ENCODE measurements at regions of chrX and their contacts with region 1.

Region 1: GRCh38 chrX:71400710-71401109 is 34.6 kb downstream of the TAF1 start:
- DNase-seq: no peak
- ATAC-seq: no peak
- H3K4me3 ChIP-seq: no peak overlapping the region
- H3K27ac ChIP-seq: no peak overlapping the region
- H3K4me1 ChIP-seq: no peaks in the 10 kb centered on the region
- H3K27me3 ChIP-seq: peaks cover 0 to 6% (median 2%) of the 10 kb centered on the region in 4 donors
- CTCF ChIP-seq: no peak

Region 2: DNA sequence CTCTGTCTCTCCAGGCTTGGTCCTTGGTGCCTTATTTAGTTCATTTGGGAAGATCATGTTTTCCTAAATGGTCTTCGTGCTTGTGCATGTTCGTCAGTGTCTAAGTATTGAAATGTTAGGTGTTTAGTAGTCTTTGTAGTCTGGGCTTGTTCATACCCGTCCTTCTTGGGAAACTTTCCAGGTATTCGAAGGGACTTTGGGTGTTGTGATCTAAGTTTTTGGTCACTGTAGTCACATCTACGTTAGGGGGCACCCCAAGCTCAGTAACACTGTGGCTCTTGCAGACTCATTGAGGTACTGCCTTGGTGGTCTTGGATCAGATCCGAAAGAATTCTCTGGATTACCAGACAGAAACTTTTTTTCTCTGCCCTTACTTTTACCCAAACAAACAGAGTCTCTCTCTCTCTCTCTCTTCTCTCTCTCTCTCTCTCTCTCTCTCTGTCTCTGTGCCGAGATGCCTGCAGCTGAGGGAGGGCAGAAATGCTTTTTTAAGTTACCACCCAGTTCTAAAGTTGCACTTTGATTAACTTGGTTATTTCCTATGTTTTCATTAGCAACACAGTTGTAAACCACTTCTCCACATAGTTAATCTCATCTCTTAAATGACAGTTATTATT is 402.2 kb before region 1 on chrX:
- intact Hi-C with region 1: no loop called
- DNase-seq: no peak
- ATAC-seq: no peak
- H3K4me3 ChIP-seq: no peak overlapping the region
- H3K27ac ChIP-seq: no peak overlapping the region
- H3K4me1 ChIP-seq: no peaks in the 10 kb centered on the region
- H3K27me3 ChIP-seq: peaks cover 0 to 6% (median 2%) of the 10 kb centered on the region in 4 donors
- CTCF ChIP-seq: no peak

Region 3: GRCh38 chrX:71565474-71566041 is 164.8 kb after region 1 on chrX:
- intact Hi-C with region 1: loop called in 1 of 3 experiments (anchors 10 kb)
- DNase-seq: no peak
- ATAC-seq: no peak
- H3K4me3 ChIP-seq: no peak overlapping the region
- H3K27ac ChIP-seq: no peak overlapping the region
- H3K4me1 ChIP-seq: no peaks in the 10 kb centered on the region
- H3K27me3 ChIP-seq: peaks cover 0 to 7% (median 0%) of the 10 kb centered on the region in 4 donors
- CTCF ChIP-seq: no peak